Activated naive CD4-positive, alpha-beta T cell treated with anti-CD3 and anti-CD28 coated beads for 36 hours (primary cell): ENCODE measurements at regions of chr9 and their contacts with region 1.

Region 1: DNA sequence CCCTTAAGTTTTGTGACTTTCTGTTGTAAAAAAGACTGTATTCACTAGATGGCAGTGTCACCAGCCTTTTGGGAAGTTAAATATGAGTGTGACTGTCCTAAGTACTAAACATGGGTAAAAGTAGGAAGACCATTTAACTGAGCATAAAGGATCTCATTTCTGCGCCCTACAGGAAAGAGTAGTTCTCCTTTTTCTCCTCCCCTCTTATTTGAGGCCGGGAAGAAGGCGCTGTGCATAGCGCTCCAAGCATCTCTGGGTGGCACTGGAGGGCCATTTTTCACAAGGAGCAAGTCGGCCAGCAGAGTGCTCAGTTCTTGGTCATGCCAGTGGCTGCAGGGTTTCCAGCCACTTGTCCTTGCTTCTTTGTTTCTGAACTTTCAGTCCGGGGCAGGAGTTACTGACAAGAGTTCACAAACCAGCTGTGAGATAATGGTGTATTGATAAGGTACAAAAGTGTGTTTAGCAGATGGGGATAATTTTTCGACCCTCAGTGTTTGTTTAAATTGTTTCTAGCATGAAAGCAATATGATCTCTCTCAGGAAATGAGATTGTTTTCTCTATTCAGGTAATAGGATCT is 227.6 kb upstream of the DMRT1 start:
- DNase-seq: peak; percentile 68
- H3K4me3 Mint-ChIP-seq: no peak overlapping the region
- H3K27ac Mint-ChIP-seq: no peak overlapping the region
- H3K4me1 Mint-ChIP-seq: peaks cover 5% of the 10 kb centered on the region
- H3K27me3 Mint-ChIP-seq: no peaks in the 10 kb centered on the region

Region 2: GRCh38 chr9:347667-348292 is 266.1 kb before region 1 on chr9:
- CTCF ChIA-PET with region 1: no interaction called
- intact Hi-C with region 1: loop called (anchors 5 kb)
- DNase-seq: no peak
- H3K4me3 Mint-ChIP-seq: no peak overlapping the region
- H3K27ac Mint-ChIP-seq: no peak overlapping the region
- H3K4me1 Mint-ChIP-seq: peaks cover 23% of the 10 kb centered on the region
- H3K27me3 Mint-ChIP-seq: no peaks in the 10 kb centered on the region

Region 3: GRCh38 chr9:757246-757881 is 143.5 kb after region 1 on chr9:
- CTCF ChIA-PET with region 1: interaction called, 28 read pairs
- intact Hi-C with region 1: loop called (anchors 1 kb)
- DNase-seq: peak; percentile 35
- H3K4me3 Mint-ChIP-seq: no peak overlapping the region
- H3K27ac Mint-ChIP-seq: no peak overlapping the region
- H3K4me1 Mint-ChIP-seq: peaks cover 3% of the 10 kb centered on the region
- H3K27me3 Mint-ChIP-seq: no peaks in the 10 kb centered on the region

Region 4: GRCh38 chr9:806285-807156 is 192.7 kb after region 1 on chr9:
- CTCF ChIA-PET with region 1: interaction called, 7 read pairs
- intact Hi-C with region 1: loop called (anchors 1 kb)
- DNase-seq: no peak
- H3K4me3 Mint-ChIP-seq: no peak overlapping the region
- H3K27ac Mint-ChIP-seq: no peak overlapping the region
- H3K4me1 Mint-ChIP-seq: no peaks in the 10 kb centered on the region
- H3K27me3 Mint-ChIP-seq: no peaks in the 10 kb centered on the region

Region 5: DNA sequence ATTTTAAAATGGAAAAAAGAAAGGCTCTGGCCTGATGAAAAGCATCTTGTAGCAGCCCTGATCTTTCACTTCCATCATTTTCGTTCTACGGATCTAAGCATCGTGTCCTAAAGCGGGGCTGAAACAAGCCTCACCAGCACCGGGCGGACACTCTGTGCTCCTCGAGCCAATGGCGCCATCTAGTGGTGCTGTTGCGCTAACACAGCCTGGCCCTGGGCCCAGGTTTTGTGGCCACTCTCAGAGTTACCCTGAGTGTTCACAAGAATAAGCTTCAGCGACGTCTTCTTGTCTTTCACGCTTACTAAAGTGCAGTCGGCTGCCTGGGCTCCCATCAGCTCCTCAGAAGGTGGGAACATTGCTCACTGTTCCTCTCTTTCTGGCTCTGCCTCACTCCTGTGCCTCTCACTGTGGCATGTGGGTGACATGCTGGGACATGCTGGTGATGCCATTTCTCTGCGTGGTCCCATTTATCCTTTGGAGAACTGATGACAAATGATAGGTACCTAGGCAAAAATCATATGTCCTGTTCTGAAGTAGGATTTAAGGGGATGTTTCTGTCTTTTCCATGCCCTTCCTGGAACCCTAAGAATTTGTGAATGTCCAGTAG is 395.3 kb after region 1 on chr9:
- CTCF ChIA-PET with region 1: interaction called, 3 read pairs
- intact Hi-C with region 1: loop called (anchors 2 kb)
- DNase-seq: peak; percentile 88
- H3K4me3 Mint-ChIP-seq: no peak overlapping the region
- H3K27ac Mint-ChIP-seq: no peak overlapping the region
- H3K4me1 Mint-ChIP-seq: peaks cover 7% of the 10 kb centered on the region
- H3K27me3 Mint-ChIP-seq: peaks cover 30% of the 10 kb centered on the region